Left colon (tissue), 2 donors: ENCODE measurements at regions of chr1 and their contacts with region 1.

Region 1: GRCh38 chr1:52127181-52128180 is 14.4 kb upstream of the ZFYVE9 start:
- DNase-seq: peak in 1 of 2 donors; percentile 36
- ATAC-seq: peak; percentile 75

Region 2: DNA sequence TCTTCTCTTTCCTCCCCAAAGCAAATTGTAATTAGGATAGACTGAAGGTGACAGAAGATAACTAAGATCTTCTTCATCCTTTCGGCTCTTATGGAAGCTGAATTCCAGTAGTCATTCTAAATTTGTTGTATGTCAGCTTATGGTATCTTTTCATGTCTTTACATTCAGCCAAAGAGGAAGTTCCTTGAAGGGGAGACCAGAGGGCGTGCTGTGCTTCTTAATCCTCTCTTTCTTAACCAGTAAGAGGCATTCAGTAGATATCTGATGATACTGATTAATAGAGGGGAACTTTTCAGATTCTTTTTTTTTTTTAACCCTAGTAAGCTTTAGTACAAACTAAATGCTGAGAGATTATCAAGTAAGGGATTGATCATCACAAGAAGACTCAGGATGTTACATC is 408.3 kb before region 1 on chr1:
- intact Hi-C with region 1: no loop called
- DNase-seq: no peak
- ATAC-seq: no peak

Region 3: DNA sequence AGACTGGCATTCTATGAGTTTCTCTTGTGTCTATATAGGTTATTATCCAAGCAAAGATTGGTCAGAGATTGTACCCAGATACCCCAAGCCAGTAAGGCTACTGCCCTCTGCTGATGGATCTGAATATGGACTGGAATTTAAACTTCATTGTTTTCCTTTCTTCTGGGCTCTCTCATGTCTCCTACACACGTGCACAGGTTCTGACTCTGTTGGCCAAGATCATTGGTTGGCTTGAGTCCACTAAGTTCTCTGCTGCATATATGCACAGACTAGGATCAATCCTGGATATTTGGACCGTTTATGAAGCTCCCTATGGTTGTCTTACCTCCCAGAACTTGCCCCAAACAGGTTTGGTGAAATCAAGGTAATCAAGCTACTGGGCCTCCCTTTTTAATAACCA is 168.9 kb after region 1 on chr1:
- intact Hi-C with region 1: loop called (anchors 5 to 10 kb)
- DNase-seq: no peak
- ATAC-seq: peak; percentile 97

Region 4: GRCh38 chr1:52306227-52307006 is 178.9 kb after region 1 on chr1:
- intact Hi-C with region 1: loop called in 1 of 2 experiments (anchors 10 kb)
- DNase-seq: no peak
- ATAC-seq: no peak